Activated naive CD4-positive, alpha-beta T cell treated with anti-CD3 and anti-CD28 coated beads for 36 hours (primary cell): ENCODE measurements at regions of chr10 and their contacts with region 1.

Region 1: GRCh38 chr10:6187278-6187677 is 15.5 kb upstream of the PFKFB3 start:
- DNase-seq: no peak
- H3K4me3 Mint-ChIP-seq: no peak overlapping the region
- H3K27ac Mint-ChIP-seq: no peak overlapping the region
- H3K4me1 Mint-ChIP-seq: peaks cover 45% of the 10 kb centered on the region
- H3K27me3 Mint-ChIP-seq: no peaks in the 10 kb centered on the region

Region 2: DNA sequence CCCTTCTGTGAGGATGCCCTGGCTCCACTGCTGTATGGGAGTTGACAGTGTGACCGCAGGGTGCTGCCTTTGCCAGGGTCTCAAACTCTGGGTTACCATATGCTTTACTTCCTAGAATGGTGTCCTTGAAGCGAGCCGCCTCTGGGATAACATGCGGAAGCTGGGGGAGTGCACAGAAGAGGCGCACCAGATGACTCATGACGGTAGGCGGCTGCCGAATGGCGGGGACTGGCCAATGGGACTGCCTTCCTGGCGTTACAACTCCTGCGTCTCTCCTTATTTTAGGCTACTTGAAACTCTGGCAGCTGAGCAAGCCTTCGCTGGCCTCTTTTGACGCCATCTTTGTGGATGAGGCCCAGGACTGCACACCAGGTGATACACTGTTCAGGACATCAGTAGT is 270.0 kb before region 1 on chr10:
- CTCF ChIA-PET with region 1: no interaction called
- intact Hi-C with region 1: no loop called
- DNase-seq: no peak
- H3K4me3 Mint-ChIP-seq: no peak overlapping the region
- H3K27ac Mint-ChIP-seq: no peak overlapping the region
- H3K4me1 Mint-ChIP-seq: no peaks in the 10 kb centered on the region
- H3K27me3 Mint-ChIP-seq: no peaks in the 10 kb centered on the region

Region 3: GRCh38 chr10:6171881-6172695 is 15.2 kb before region 1 on chr10:
- CTCF ChIA-PET with region 1: no interaction called
- intact Hi-C with region 1: loop called (anchors 2 kb)
- DNase-seq: peak; percentile 82
- H3K4me3 Mint-ChIP-seq: no peak overlapping the region
- H3K27ac Mint-ChIP-seq: peak overlapping the region; percentile 70
- H3K4me1 Mint-ChIP-seq: peaks cover 86% of the 10 kb centered on the region
- H3K27me3 Mint-ChIP-seq: no peaks in the 10 kb centered on the region